CD8-positive, alpha-beta T cell (primary cell): ENCODE measurements at regions of chr19 and their contacts with region 1.

Region 1: GRCh38 chr19:51372649-51373504 is at the start of gene NKG7:
- DNase-seq: peak; percentile 39 to 95 (median 79)
- ATAC-seq: peak; percentile 78
- H3K4me3 ChIP-seq: peak within 1 kb of the TSS; percentile 54 to 77
- H3K4me3 Mint-ChIP-seq: peak within 1 kb of the TSS; percentile 98
- H3K27ac ChIP-seq: peak within 1 kb of the TSS; percentile 67 to 78
- H3K27ac Mint-ChIP-seq: peak within 1 kb of the TSS; percentile 96
- H3K4me1 ChIP-seq: peaks cover 69% of the 10 kb centered on the region
- H3K4me1 Mint-ChIP-seq: peaks cover 72% of the 10 kb centered on the region
- H3K27me3 ChIP-seq: no peaks in the 10 kb centered on the region
- H3K27me3 Mint-ChIP-seq: no peaks in the 10 kb centered on the region
- CTCF ChIP-seq: no peak
- total RNA-seq, gene NKG7: 159 to 169 TPM

Region 2: GRCh38 chr19:51407511-51408131 is 34.7 kb after region 1 on chr19:
- CTCF ChIA-PET with region 1: no interaction called
- POLR2A ChIA-PET with region 1: no interaction called
- intact Hi-C with region 1: loop called in 1 of 2 experiments (anchors 5 kb)
- DNase-seq: peak in 6 of 9 experiments; percentile 12 to 69 (median 50)
- ATAC-seq: peak; percentile 65
- H3K4me3 ChIP-seq: no peak overlapping the region
- H3K4me3 Mint-ChIP-seq: no peak overlapping the region
- H3K27ac ChIP-seq: no peak overlapping the region
- H3K27ac Mint-ChIP-seq: no peak overlapping the region
- H3K4me1 ChIP-seq: no peaks in the 10 kb centered on the region
- H3K4me1 Mint-ChIP-seq: no peaks in the 10 kb centered on the region
- H3K27me3 ChIP-seq: no peaks in the 10 kb centered on the region
- H3K27me3 Mint-ChIP-seq: peaks cover 8% of the 10 kb centered on the region
- CTCF ChIP-seq: peak; percentile 45